GM23248 (cell line): ENCODE measurements at regions of chr6 and their contacts with region 1.

Region 1: DNA sequence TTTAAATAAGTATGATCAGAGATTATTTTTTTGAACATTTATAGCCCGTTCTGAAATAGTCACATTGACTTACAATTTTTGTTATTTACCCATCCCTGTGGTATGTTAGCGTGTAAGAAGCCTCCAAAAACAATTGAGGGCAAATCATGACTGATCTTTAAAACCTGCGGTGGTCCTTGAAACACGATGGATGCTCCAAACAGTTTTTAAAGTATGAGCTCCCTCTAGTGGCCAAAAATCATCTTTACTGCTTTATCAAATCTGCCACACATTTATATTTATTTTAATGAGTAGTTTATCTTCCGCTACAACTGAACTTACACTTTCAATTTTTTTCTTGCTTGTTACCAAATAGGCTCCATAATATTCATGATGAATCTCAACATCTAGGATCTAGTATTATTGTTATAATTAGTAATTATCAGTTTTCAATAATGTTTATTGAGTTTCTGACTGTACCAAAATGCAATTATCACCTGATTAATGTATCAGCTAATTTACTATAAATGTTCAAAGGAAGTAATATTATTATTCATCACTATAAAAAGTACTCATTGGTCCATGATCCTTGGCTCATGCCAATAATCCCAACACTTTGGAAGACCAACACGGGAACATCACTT is 52.2 kb downstream of the MARCKS start:
- DNase-seq: peak; percentile 76
- H3K4me3 ChIP-seq: peak overlapping the region; percentile 50
- H3K27ac ChIP-seq: no peak overlapping the region
- H3K4me1 ChIP-seq: peaks cover 5% of the 10 kb centered on the region; the same call in 1 of the 2 replicates
- H3K27me3 ChIP-seq: no peaks in the 10 kb centered on the region

Region 2: GRCh38 chr6:112337209-112337638 is 1572.1 kb before region 1 on chr6:
- in situ Hi-C with region 1: loop called (anchors 25 kb)
- DNase-seq: peak; percentile 96
- H3K4me3 ChIP-seq: no peak overlapping the region
- H3K27ac ChIP-seq: peak overlapping the region; percentile 43
- H3K4me1 ChIP-seq: peaks cover 47% of the 10 kb centered on the region
- H3K27me3 ChIP-seq: no peaks in the 10 kb centered on the region

Region 3: GRCh38 chr6:112773187-112773586 is 1136.2 kb before region 1 on chr6:
- in situ Hi-C with region 1: loop called (anchors 10 kb)
- DNase-seq: peak; percentile 53
- H3K4me3 ChIP-seq: no peak overlapping the region; the same call in 1 of the 2 replicates
- H3K27ac ChIP-seq: peak overlapping the region; percentile 6; the same call in 1 of the 2 replicates
- H3K4me1 ChIP-seq: peaks cover 18% of the 10 kb centered on the region
- H3K27me3 ChIP-seq: no peaks in the 10 kb centered on the region